Activated B cell treated with CpG ODN at 0.5 μM for 24 hours (primary cell): ENCODE measurements at regions of chr15 and their contacts with region 1.

Region 1: GRCh38 chr15:40513609-40514008 is 42.8 kb downstream of the CHST14 start:
- DNase-seq: no peak
- ATAC-seq: no peak
- H3K4me3 Mint-ChIP-seq: no peak overlapping the region
- H3K27ac Mint-ChIP-seq: no peak overlapping the region
- H3K4me1 Mint-ChIP-seq: peaks cover 20% of the 10 kb centered on the region
- H3K27me3 Mint-ChIP-seq: no peaks in the 10 kb centered on the region
- CTCF ChIP-seq: no peak

Region 2: GRCh38 chr15:40421246-40422157 is 92.1 kb before region 1 on chr15:
- CTCF ChIA-PET with region 1: no interaction called
- POLR2A ChIA-PET with region 1: no interaction called
- intact Hi-C with region 1: no loop called
- DNase-seq: peak; percentile 77
- ATAC-seq: peak; percentile 97
- H3K4me3 Mint-ChIP-seq: no peak overlapping the region
- H3K27ac Mint-ChIP-seq: no peak overlapping the region
- H3K4me1 Mint-ChIP-seq: peaks cover 2% of the 10 kb centered on the region
- H3K27me3 Mint-ChIP-seq: no peaks in the 10 kb centered on the region
- CTCF ChIP-seq: peak; percentile 86

Region 3: DNA sequence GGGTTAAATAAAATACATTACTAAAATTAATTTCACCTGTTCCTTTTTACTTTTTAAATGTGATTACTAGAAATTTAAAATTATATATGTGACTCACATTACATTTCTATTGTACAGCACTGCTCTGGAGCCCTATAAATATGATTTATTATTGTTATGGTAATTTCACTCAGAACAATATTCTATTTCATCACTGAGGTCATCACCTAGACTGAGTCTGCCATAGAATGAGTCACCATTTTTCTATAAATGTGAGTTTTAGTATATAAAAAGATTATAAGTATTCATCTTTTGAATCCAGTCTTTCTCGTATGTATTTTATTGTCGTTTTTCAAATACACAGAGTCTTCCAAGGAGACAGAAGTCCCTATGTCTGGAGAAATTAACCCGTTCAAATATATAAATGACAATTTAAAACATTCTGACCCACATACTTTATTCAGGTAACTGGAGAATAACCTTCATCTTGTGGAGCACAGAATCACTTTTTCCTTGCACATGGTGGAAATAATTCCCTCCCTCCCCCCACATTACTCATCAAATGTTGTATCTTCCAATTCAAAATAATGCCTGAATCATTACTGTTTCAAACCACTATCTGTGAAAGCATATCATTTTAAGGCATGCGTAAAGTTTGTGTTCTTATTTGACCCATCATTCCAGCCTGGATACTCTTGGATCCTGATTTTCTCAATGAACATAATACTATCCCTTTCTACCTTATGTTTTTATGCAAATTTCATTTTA is 12.9 kb before region 1 on chr15:
- CTCF ChIA-PET with region 1: no interaction called
- POLR2A ChIA-PET with region 1: no interaction called
- intact Hi-C with region 1: no loop called
- DNase-seq: no peak
- ATAC-seq: no peak
- H3K4me3 Mint-ChIP-seq: no peak overlapping the region
- H3K27ac Mint-ChIP-seq: no peak overlapping the region
- H3K4me1 Mint-ChIP-seq: no peaks in the 10 kb centered on the region
- H3K27me3 Mint-ChIP-seq: peaks cover 36% of the 10 kb centered on the region
- CTCF ChIP-seq: no peak

Region 4: DNA sequence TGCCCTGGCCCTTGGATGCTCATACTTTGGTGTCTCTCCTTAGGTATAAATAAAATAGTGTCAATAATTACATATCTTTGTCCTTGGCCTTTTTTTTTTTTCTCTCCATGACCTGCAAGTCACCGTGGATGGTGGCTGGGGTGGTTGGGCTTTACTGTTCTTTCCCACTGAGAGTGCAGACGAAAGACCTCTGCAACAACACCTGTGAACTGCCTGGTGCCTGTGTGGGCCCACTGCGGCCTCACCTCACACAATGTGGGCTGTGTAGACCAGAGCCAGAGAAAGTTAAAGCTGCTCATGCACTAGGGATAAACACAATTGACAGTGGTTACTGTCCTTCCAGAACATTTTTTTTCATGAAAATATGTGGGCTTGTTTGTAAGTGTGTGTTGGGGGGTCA is 12.2 kb after region 1 on chr15:
- CTCF ChIA-PET with region 1: no interaction called
- POLR2A ChIA-PET with region 1: no interaction called
- intact Hi-C with region 1: no loop called
- DNase-seq: no peak
- ATAC-seq: no peak
- H3K4me3 Mint-ChIP-seq: no peak overlapping the region
- H3K27ac Mint-ChIP-seq: no peak overlapping the region
- H3K4me1 Mint-ChIP-seq: no peaks in the 10 kb centered on the region
- H3K27me3 Mint-ChIP-seq: no peaks in the 10 kb centered on the region
- CTCF ChIP-seq: no peak

Region 5: DNA sequence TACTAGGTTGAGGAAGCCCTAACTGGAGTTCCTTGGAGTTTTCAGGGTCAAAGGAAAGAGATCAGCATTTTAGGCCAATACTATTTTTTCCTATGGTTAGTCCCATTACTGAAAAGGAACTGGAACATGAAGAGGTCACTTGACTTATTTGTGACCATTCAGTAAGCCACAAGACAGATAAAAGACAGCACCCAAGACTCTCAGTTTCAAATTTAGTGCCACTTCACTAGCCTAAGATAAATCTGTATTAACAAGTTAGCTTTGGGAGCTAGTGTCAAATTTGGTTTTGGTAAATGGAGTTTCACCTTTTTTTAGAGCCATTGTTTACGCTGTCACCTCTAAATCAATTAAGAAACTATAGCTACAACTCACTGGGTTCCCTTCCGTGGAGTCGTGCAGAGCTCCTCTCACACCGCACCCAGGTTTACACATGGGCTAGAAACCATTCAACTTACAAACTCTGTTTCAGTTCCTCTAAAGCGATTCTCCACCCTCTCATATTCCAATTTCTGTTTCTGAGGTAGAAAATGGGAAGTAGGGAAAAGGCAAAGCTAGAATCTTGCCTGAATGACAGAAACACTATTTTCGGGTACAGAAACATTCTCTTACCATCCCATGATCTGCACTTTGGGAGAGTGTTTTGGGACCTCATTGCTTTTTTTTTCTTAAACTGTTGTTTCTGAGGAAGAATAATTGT is 36.9 kb after region 1 on chr15:
- CTCF ChIA-PET with region 1: no interaction called
- POLR2A ChIA-PET with region 1: no interaction called
- intact Hi-C with region 1: loop called (anchors 5 kb)
- DNase-seq: no peak
- ATAC-seq: peak; percentile 84
- H3K4me3 Mint-ChIP-seq: peak overlapping the region; percentile 76
- H3K27ac Mint-ChIP-seq: peak overlapping the region; percentile 93
- H3K4me1 Mint-ChIP-seq: peaks cover 92% of the 10 kb centered on the region
- H3K27me3 Mint-ChIP-seq: no peaks in the 10 kb centered on the region
- CTCF ChIP-seq: no peak